ENCODE measurements at regions of chr6 and their contacts with region 1.

Region 1: GRCh38 chr6:18990059-18990978 is 603.2 kb downstream of the RNF144B start:
- DNase-seq: peak; percentile 60
- ATAC-seq: no peak
- H3K4me3 Mint-ChIP-seq: no peak overlapping the region
- H3K27ac Mint-ChIP-seq: no peak overlapping the region
- H3K4me1 Mint-ChIP-seq: no peaks in the 10 kb centered on the region
- H3K27me3 Mint-ChIP-seq: no peaks in the 10 kb centered on the region
- CTCF ChIP-seq: peak; percentile 35

Region 2: DNA sequence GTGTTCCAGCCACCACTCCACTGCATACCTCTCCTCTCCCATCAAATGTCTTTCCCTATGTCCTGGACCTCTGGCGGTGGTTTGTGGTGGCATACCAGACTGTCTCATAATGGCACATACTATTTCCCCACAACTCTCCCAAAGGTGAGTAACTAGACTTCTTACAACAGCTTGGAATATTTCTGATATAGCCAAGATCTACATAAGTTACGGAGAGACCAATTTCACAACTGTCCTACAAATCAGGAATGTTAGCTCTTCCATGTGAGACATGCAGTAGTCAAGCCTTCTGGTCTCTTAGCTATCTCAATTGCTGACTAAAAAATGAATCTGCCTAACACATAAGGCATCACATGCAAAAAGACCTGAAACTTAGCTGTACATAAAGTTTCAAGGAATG is 14.2 kb before region 1 on chr6:
- CTCF ChIA-PET with region 1: interaction called, 10 read pairs
- POLR2A ChIA-PET with region 1: no interaction called
- intact Hi-C with region 1: no loop called
- DNase-seq: no peak
- ATAC-seq: no peak
- H3K4me3 Mint-ChIP-seq: no peak overlapping the region
- H3K27ac Mint-ChIP-seq: no peak overlapping the region
- H3K4me1 Mint-ChIP-seq: no peaks in the 10 kb centered on the region
- H3K27me3 Mint-ChIP-seq: no peaks in the 10 kb centered on the region
- CTCF ChIP-seq: no peak

Region 3: GRCh38 chr6:19013026-19013705 is 22.8 kb after region 1 on chr6:
- CTCF ChIA-PET with region 1: no interaction called
- POLR2A ChIA-PET with region 1: no interaction called
- intact Hi-C with region 1: no loop called
- DNase-seq: no peak
- ATAC-seq: no peak
- H3K4me3 Mint-ChIP-seq: no peak overlapping the region
- H3K27ac Mint-ChIP-seq: no peak overlapping the region
- H3K4me1 Mint-ChIP-seq: no peaks in the 10 kb centered on the region
- H3K27me3 Mint-ChIP-seq: no peaks in the 10 kb centered on the region
- CTCF ChIP-seq: no peak

Measured in activated CD8-positive, alpha-beta T cell treated with anti-CD3 and anti-CD28 coated beads for 36 hours (primary cell).